ENCODE measurements at regions of chr19 and their contacts with region 1.

Region 1: DNA sequence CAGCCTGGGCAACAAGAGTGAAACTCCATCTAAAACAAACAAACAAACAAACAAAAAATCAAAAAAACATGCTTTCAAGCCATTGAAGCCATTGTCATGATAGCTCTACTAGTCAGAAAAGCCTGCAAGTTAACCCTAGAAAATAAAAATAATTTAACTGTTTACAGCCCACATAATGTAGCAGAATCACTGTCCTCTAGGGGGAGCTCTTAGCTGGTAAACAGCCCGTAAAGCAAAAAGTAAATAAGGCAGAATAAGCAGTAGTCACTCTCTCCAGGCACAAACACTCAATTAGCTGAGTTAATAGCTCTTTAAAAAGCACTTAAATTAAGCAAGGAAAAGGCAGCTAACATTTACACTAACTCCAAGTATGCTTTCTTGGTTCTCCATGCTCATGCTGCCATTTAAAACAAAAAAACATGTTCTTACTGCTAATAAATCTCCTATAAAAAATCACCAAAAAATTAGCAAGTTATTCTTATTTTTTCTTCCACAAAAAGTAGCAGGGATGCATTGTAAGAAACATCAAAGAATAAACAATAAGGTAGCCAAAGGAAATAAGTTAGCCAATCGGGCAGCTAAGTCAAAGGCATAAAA is 11.3 kb downstream of the LILRB4 start:
- DNase-seq: no peak
- H3K4me3 ChIP-seq: no peak overlapping the region
- H3K4me3 Mint-ChIP-seq: no peak overlapping the region
- H3K27ac ChIP-seq: no peak overlapping the region
- H3K27ac Mint-ChIP-seq: no peak overlapping the region
- H3K4me1 ChIP-seq: no peaks in the 10 kb centered on the region
- H3K4me1 Mint-ChIP-seq: no peaks in the 10 kb centered on the region
- H3K27me3 ChIP-seq: no peaks in the 10 kb centered on the region
- H3K27me3 Mint-ChIP-seq: peaks cover 9 to 26% of the 10 kb centered on the region in 2 donors

Region 2: GRCh38 chr19:54684527-54684926 is 10.4 kb after region 1 on chr19:
- CTCF ChIA-PET with region 1: interaction called, 11 read pairs
- POLR2A ChIA-PET with region 1: no interaction called
- DNase-seq: no peak
- H3K4me3 ChIP-seq: no peak overlapping the region
- H3K4me3 Mint-ChIP-seq: no peak overlapping the region
- H3K27ac ChIP-seq: no peak overlapping the region
- H3K27ac Mint-ChIP-seq: no peak overlapping the region
- H3K4me1 ChIP-seq: no peaks in the 10 kb centered on the region
- H3K4me1 Mint-ChIP-seq: no peaks in the 10 kb centered on the region
- H3K27me3 ChIP-seq: peaks cover under 1% of the 10 kb centered on the region
- H3K27me3 Mint-ChIP-seq: peaks cover 6 to 26% of the 10 kb centered on the region in 2 donors

Region 3: DNA sequence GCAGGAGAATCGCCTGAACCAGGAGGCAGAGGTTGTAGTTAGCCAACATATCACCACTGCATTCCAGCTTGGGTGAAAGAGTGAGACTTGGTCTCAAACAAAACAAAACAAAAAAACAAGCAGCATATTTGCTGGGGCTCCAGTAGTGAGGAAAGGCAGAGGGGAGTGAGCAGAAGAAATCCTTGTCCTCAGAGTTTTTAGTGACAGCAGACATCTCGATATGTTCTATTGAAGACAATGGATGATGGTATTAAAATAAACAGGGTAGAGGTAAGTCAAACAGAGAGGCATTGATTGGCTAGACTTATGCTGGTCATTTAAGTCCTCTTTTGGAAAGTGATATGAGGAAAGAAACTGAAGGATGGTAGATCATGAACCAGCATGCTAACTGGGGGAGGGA is 254.2 kb after region 1 on chr19:
- CTCF ChIA-PET with region 1: no interaction called
- POLR2A ChIA-PET with region 1: no interaction called
- DNase-seq: no peak
- H3K4me3 ChIP-seq: no peak overlapping the region
- H3K4me3 Mint-ChIP-seq: no peak overlapping the region
- H3K27ac ChIP-seq: no peak overlapping the region
- H3K27ac Mint-ChIP-seq: no peak overlapping the region
- H3K4me1 ChIP-seq: no peaks in the 10 kb centered on the region
- H3K4me1 Mint-ChIP-seq: no peaks in the 10 kb centered on the region
- H3K27me3 ChIP-seq: no peaks in the 10 kb centered on the region
- H3K27me3 Mint-ChIP-seq: peaks cover 4 to 5% of the 10 kb centered on the region in 2 donors

Measured in CD8-positive, alpha-beta memory T cell (primary cell).